ENCODE measurements at regions of chr12 and their contacts with region 1.

Region 1: GRCh38 chr12:29528161-29528560 is 30.7 kb upstream of the OVCH1 start:
- DNase-seq: no peak
- H3K4me3 ChIP-seq: no peak overlapping the region
- CTCF ChIP-seq: no peak
- POLR2A ChIP-seq: no peak

Region 2: GRCh38 chr12:29591140-29592020 is 63.2 kb after region 1 on chr12:
- intact Hi-C with region 1: loop called (anchors 5 kb)
- DNase-seq: no peak
- H3K4me3 ChIP-seq: no peak overlapping the region
- CTCF ChIP-seq: no peak
- POLR2A ChIP-seq: no peak